Activated T-helper 1 cell treated with anti-CD3 and anti-CD28 coated beads, Interleukin-12 subunit alpha, Interleukin-12 subunit beta, Interleukin-2, Interleukin-4 antibody, amounts not matched to agents 30 ng/mL and 10 ng/mL and 1 ng/mL, durations not matched to agents 14 hours and 24 hours and 36 hours (primary cell): ENCODE measurements at regions of chr17 and their contacts with region 1.

Region 1: DNA sequence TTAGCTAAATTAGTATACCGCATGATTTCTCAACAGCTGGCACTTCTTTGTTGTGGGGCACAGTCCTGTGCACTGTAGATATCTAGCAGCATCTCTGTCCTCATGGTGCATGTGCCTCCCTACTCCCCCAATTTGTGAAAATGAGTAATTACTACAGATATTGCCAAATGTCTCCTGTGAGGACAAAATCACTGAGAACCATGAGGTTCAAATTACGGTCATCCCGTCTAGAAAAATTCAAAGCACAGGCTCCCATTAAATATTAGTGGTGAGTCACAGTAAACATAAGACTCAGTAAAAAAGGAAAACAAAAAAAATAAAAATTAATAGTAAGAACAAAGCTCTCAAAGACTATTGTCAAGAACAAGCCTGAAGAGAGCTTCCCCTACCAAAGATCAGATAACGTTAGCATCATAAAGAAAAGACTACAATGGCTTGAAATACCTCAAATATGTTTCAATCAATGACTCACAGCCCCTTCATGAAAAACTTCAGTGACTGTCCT is 57.8 kb downstream of the STH start:
- DNase-seq: no peak
- H3K4me3 Mint-ChIP-seq: no peak overlapping the region
- H3K27ac Mint-ChIP-seq: no peak overlapping the region
- H3K4me1 Mint-ChIP-seq: peaks cover 37% of the 10 kb centered on the region
- H3K27me3 Mint-ChIP-seq: no peaks in the 10 kb centered on the region

Region 2: DNA sequence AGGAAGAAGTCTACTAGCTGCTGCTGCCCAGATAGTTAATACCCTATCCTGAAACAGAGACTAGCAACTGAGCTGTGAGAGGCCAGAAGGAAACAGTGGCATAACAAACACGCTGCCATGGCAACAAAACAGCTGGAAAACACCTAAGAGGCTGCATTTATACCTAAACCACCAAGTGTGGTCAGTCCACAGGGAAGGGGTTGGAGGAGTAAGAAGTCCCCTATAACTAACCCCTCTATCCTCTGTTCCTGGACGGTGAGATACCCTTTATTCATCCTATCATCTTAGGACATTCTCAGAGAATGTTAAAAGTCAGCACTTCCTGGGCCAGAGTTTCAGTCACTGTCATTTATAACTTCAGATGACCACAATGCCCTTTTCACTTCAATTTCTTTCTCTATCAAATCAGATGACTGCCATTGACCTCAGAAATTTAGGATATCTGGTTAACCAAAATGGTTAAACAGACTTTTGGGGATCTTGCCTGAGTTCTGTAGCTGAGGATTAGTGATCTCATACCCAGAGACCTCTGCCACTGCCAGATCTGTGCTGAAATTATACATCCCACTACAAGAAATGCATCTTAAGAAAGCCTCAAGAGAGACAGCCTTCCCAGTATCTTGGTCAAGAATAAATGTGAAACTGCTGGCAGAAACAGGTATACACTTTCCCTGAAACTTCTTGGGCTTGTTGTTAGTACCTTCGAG is 21.6 kb before region 1 on chr17:
- intact Hi-C with region 1: loop called (anchors 1 kb)
- DNase-seq: peak; percentile 11
- H3K4me3 Mint-ChIP-seq: no peak overlapping the region
- H3K27ac Mint-ChIP-seq: peak overlapping the region; percentile 65
- H3K4me1 Mint-ChIP-seq: peaks cover 25% of the 10 kb centered on the region
- H3K27me3 Mint-ChIP-seq: no peaks in the 10 kb centered on the region

Region 3: DNA sequence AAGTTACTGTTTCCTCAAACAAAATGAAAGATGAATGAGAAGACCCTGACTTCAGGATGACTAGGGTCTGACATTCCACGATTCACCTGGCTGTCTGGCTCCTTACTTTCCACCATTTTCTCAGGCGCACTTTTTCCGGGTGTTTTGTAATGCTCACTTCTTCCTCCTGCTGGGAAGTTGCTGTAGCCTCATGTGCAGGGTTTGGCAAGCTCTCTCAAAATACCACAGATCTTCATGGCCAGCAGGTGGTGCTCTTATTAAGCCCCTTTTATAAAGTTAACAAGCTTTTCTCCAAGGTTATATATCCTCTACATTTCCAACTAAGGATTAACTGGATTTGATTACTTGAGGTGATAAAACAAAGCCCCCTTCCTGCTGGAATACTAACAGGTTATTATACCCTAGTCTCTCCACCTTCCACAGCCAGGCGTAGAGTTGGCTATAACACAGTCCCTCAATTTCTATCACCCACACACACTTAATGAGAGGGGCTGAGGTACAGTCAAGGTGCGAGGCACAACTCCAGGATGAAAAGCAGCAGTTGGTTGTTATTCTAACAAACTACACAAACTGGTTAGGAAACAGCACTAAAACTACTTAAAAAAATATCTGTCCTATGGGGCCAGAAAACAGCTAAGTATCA is 12.4 kb before region 1 on chr17:
- intact Hi-C with region 1: loop called (anchors 2 kb)
- DNase-seq: peak; percentile 12
- H3K4me3 Mint-ChIP-seq: no peak overlapping the region
- H3K27ac Mint-ChIP-seq: peak overlapping the region; percentile 2
- H3K4me1 Mint-ChIP-seq: peaks cover 30% of the 10 kb centered on the region
- H3K27me3 Mint-ChIP-seq: no peaks in the 10 kb centered on the region

Region 4: GRCh38 chr17:46089389-46089965 is 32.6 kb after region 1 on chr17:
- intact Hi-C with region 1: loop called (anchors 2 kb)
- DNase-seq: no peak
- H3K4me3 Mint-ChIP-seq: no peak overlapping the region
- H3K27ac Mint-ChIP-seq: peak overlapping the region; percentile 82
- H3K4me1 Mint-ChIP-seq: peaks cover 39% of the 10 kb centered on the region
- H3K27me3 Mint-ChIP-seq: no peaks in the 10 kb centered on the region

Region 5: GRCh38 chr17:46154151-46154816 is 97.4 kb after region 1 on chr17:
- intact Hi-C with region 1: loop called (anchors 1 kb)
- DNase-seq: peak; percentile 27
- H3K4me3 Mint-ChIP-seq: peak overlapping the region; percentile 76
- H3K27ac Mint-ChIP-seq: peak overlapping the region; percentile 82
- H3K4me1 Mint-ChIP-seq: peaks cover 82% of the 10 kb centered on the region
- H3K27me3 Mint-ChIP-seq: no peaks in the 10 kb centered on the region